ENCODE measurements at regions of chr7 and their contacts with region 1.

Region 1: DNA sequence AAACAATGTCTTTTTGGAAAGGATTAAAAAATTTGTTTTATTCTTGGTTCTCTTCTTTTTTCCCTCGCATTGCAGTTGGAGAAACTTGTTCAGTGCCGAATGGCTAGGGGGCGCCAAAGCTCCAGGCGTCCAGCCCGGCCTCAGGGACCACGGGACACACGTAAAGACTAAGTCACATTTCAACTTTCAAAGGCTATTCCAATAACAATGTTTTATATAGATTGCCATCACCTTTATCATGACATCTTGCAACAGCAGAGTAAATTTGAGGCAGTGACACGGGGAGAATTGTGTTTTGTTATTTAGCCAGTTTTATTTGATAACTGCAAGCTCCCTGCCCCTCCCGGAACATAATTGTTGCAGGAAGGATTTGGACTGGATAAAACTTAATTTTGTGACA is 2.2 kb upstream of the IGFBP3 start:
- DNase-seq: peak; percentile 69 to 95
- H3K4me3 ChIP-seq: no peak overlapping the region
- CTCF ChIP-seq: no peak
- POLR2A ChIP-seq: no peak

Region 2: DNA sequence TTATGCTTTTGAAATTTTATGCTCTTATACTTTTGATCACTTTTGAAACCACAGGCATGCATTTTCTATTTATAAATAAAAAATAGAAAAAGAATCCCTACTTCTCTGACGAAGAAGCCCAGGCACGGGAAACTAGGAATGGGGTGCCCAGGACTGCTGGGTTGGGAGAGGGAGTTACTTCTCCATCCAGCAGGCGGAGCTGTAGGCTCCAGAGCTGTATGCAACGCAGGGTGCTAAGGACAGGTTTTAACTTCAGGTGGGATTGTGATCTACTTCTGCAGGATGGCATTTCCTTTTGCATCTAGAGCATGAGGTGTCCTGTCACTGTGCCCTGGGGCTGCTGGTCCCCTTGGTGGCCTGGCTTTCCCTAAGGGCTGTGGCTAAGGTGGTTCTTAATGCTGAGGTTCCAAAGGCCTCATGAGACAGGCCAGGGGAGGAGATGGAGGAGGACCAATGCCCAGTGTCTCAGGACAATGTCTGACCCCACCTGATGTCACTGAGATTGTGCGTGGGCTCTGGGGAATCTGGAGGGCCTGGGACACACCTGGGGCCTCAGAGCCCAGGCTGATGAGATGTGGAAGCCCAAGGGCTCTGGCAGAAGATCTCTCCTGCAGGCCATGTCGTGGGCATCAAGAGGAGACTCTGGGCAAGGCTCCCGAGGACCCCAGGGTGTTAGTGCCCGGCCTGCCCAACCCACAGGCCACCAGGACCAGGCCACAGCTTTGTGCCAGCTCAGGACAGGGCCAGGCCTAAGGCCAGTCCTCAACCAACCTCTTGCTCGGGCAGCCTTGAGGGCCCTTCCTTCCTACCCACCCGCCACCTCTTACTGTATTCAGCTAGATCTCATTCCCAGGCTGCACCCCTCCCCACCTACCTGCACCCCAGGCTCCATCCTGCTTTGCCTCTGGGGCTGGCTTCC is 50.9 kb before region 1 on chr7:
- intact Hi-C with region 1: no loop called
- DNase-seq: peak in 1 of 2 donors; percentile 73
- H3K4me3 ChIP-seq: no peak overlapping the region
- CTCF ChIP-seq: no peak
- POLR2A ChIP-seq: no peak

Region 3: DNA sequence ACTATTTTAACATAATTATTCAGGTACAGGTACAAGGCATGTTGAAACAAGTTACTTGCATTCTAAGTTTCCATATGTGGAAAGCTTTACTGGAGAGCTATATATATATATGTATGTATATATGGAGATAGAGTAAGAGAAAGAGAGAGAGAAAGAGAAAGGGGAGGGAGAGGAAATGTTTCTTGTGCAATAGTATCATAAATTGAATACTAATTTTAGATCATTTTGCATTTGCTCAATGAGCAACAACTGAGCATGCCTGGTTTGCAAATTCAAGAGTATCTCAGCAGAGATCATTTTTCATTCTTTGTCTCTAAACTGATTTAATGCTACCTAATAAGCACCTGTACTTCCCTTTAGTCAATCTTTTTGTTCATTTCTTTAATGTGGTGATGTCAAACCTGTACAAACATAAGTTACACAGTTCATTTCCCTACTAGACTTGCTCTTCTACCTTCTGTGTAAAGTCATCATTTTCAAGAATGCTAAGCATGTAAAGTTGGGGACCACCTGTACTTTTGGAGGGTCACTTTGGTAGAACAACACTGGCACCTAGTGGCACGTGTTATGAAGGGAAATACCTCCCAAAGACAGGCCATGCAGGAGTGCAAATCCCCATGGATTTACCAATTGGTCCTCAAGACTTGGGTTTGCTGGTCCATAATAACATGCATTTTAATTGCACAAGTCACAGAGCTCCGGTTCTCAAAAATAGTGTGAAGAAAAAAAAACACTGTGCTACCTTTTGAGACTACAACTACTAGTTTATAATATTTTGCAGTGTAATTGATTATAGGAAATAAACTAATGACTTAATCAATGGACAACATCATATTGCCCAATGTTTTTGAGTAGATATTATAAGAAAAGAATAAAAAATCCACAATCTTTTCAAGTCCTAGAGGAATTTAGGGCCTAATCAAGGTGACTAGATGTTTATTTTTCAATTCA is 429.0 kb after region 1 on chr7:
- intact Hi-C with region 1: loop called (anchors 2 kb)
- DNase-seq: no peak
- H3K4me3 ChIP-seq: no peak overlapping the region
- CTCF ChIP-seq: no peak
- POLR2A ChIP-seq: no peak

Region 4: GRCh38 chr7:46468753-46469356 is 545.6 kb after region 1 on chr7:
- intact Hi-C with region 1: no loop called
- DNase-seq: no peak
- H3K4me3 ChIP-seq: no peak overlapping the region
- CTCF ChIP-seq: no peak
- POLR2A ChIP-seq: no peak

Region 5: GRCh38 chr7:47088329-47089067 is 1165.2 kb after region 1 on chr7:
- intact Hi-C with region 1: loop called (anchors 5 kb)
- DNase-seq: peak in 1 of 2 donors; percentile 35
- H3K4me3 ChIP-seq: no peak overlapping the region
- CTCF ChIP-seq: peak in 1 of 3 donors; percentile 61
- POLR2A ChIP-seq: no peak

Region 6: DNA sequence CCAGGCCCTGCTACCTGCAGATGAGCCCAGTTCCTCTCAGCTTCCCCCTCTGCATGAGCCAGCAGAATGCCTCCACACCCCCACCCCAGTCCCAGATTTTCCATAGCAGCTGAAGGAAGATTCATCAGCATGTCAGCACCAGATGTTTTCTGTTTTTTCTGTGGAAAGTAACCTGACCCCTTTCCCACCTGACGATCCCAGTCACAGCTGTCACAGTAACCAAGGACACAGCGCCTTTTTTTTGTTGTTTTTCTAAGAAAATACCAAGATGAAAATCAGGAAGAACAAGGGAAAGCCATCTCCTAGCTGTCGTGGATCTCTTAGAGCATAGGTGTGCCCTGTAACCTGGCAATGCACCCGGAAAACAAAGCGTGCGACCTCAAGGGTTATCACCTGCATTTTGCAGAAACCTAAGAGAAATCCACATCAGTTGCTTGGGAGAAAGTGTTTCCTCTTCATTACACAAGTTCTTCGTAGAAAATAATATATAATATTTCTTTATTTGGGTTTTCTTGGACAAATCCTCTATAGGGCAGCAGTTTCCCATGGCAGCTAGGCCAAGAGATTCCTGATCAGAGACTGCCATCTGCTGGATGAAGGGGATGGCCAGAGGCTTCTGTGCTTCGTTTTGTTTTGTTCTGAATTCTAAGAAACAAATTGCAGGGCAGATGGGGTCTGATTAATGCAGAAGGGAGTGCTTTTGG is 1256.7 kb after region 1 on chr7:
- intact Hi-C with region 1: loop called (anchors 2 kb)
- DNase-seq: peak in 1 of 2 donors; percentile 61
- H3K4me3 ChIP-seq: no peak overlapping the region
- CTCF ChIP-seq: no peak
- POLR2A ChIP-seq: no peak